ENCODE measurements at regions of chr16 and their contacts with region 1.

Region 1: GRCh38 chr16:60991886-60992285 is 1044.4 kb downstream of the CDH8 start:
- DNase-seq: no peak
- H3K4me3 ChIP-seq: no peak overlapping the region
- CTCF ChIP-seq: no peak
- POLR2A ChIP-seq: no peak

Region 2: DNA sequence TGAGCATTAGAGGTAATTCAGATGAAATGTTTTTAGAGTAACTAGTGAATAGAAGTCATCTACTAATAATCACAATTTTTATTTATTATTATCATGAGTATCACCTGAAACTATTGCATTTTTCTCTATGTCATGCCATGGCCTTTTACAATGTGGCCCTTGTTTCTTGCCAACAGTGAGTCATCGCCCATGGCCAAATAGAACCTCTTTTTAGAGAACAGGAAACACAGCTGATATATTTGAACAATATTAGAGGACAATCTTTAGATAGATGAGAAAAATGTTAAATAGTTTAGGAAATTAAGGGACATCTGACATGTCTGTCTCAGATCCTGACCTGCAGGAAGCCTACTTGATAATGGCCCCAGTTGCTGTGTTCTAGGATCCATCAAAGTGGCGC is 673.4 kb before region 1 on chr16:
- intact Hi-C with region 1: loop called (anchors 5 kb)
- DNase-seq: no peak
- H3K4me3 ChIP-seq: no peak overlapping the region
- CTCF ChIP-seq: no peak
- POLR2A ChIP-seq: no peak

Region 3: DNA sequence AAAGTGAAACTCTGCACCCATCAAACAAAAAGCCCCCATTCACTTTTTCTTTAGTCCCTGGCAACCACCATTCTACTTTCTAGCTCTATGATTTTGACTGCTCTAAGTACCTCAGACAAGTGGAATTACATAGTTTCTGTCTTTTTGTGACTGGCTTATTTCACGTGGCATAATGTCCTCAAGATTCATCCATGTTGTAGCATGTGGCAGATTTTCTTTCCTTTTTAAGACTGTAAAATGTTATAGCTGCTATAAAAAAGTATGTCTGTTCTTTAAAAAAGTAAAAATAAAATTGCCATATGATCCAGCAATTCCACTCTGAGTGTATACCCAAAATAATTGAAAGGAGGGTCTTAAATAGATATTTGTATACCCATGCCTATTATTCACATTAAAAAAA is 614.7 kb after region 1 on chr16:
- intact Hi-C with region 1: no loop called
- DNase-seq: no peak
- H3K4me3 ChIP-seq: no peak overlapping the region
- CTCF ChIP-seq: no peak
- POLR2A ChIP-seq: no peak

Measured in lower leg skin (tissue), 4 donors.